Mammary epithelial cell (primary cell): ENCODE measurements at regions of chr6 and their contacts with region 1.

Region 1: GRCh38 chr6:149060300-149060997 is 257.1 kb upstream of the TAB2 start:
- DNase-seq: no peak
- H3K4me3 ChIP-seq: no peak overlapping the region
- H3K27ac ChIP-seq: no peak overlapping the region
- H3K4me1 ChIP-seq: no peaks in the 10 kb centered on the region
- H3K27me3 ChIP-seq: no peaks in the 10 kb centered on the region
- CTCF ChIP-seq: no peak

Region 2: DNA sequence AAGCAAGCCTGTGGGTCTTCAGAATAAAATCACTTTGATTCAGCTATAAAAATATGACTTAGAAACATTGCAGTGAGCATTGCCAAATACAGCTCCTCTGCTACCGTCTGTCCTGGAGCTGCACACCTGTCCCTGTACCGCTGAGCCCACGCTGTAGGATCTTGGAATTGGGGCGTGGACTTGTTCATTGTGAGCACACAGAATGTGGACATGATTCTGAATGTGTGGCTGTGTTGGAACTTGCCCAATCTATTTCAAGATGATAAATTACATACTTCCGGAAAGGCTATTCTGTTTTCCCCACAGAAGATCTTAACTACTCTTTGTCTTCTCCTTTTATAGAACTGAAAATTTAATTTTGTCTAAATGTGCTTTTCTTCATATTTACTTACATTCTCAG is 206.4 kb before region 1 on chr6:
- CTCF ChIA-PET with region 1: no interaction called
- dilution Hi-C with region 1: no loop called
- in situ Hi-C with region 1: no loop called
- intact Hi-C with region 1: no loop called
- DNase-seq: peak; percentile 80
- H3K4me3 ChIP-seq: no peak overlapping the region
- H3K27ac ChIP-seq: no peak overlapping the region
- H3K4me1 ChIP-seq: peaks cover 41% of the 10 kb centered on the region
- H3K27me3 ChIP-seq: no peaks in the 10 kb centered on the region
- CTCF ChIP-seq: no peak

Region 3: DNA sequence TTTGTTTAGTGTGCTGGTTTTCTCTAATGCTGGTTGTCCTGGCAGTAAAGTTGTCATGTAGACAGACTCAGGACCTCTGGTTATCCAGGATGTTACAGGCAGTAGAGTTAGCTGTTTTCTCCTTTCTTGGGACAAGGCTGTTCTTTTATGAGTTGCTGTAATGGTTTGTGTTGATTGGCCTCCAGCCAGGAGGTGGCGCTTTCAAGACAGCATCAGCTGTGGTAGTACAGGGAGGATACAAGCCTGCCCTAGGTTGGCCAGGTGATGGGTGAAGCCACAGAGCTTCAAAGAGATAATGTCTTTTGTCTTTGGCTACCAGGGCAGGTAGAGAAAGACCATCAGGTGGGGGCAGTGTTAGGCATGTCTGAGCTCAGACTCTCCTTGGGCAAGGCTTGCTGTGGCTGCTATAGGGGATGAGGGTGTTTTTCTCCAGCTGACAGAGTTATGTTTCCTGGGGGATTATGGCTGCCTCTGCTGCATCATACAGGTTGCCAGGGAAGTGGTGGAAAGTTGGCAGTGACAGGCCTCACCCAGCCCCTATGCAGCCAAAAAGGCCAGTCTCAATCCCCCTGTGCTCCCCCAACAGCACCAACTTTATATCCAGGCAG is 129.9 kb after region 1 on chr6:
- CTCF ChIA-PET with region 1: no interaction called
- dilution Hi-C with region 1: no loop called
- in situ Hi-C with region 1: no loop called
- intact Hi-C with region 1: no loop called
- DNase-seq: peak; percentile 57
- H3K4me3 ChIP-seq: no peak overlapping the region
- H3K27ac ChIP-seq: no peak overlapping the region
- H3K4me1 ChIP-seq: no peaks in the 10 kb centered on the region
- H3K27me3 ChIP-seq: no peaks in the 10 kb centered on the region
- CTCF ChIP-seq: peak; percentile 40 to 59

Region 4: GRCh38 chr6:149405823-149406765 is 345.6 kb after region 1 on chr6:
- CTCF ChIA-PET with region 1: no interaction called
- dilution Hi-C with region 1: loop called (anchors 25 kb)
- in situ Hi-C with region 1: no loop called
- intact Hi-C with region 1: no loop called
- DNase-seq: peak; percentile 19
- H3K4me3 ChIP-seq: no peak overlapping the region
- H3K27ac ChIP-seq: no peak overlapping the region
- H3K4me1 ChIP-seq: peaks cover 5% of the 10 kb centered on the region
- H3K27me3 ChIP-seq: no peaks in the 10 kb centered on the region
- CTCF ChIP-seq: no peak

Region 5: GRCh38 chr6:150142097-150142669 is 1081.7 kb after region 1 on chr6:
- CTCF ChIA-PET with region 1: no interaction called
- dilution Hi-C with region 1: no loop called
- in situ Hi-C with region 1: no loop called
- intact Hi-C with region 1: no loop called
- DNase-seq: peak; percentile 92
- H3K4me3 ChIP-seq: peak overlapping the region; percentile 32 to 91 (median 90)
- H3K27ac ChIP-seq: peak overlapping the region; percentile 59
- H3K4me1 ChIP-seq: peaks cover 22% of the 10 kb centered on the region
- H3K27me3 ChIP-seq: no peaks in the 10 kb centered on the region
- CTCF ChIP-seq: no peak